Gastrocnemius medialis (tissue), 4 donors: ENCODE measurements at regions of chr11 and their contacts with region 1.

Region 1: GRCh38 chr11:17683378-17684161 is 35.8 kb upstream of the MYOD1 start:
- DNase-seq: peak; percentile 58 to 87
- ATAC-seq: peak; percentile 69 to 71
- H3K4me3 ChIP-seq: no peak overlapping the region
- H3K27ac ChIP-seq: peak overlapping the region; percentile 80 to 87 (median 82)
- H3K4me1 ChIP-seq: peaks cover 56 to 61% of the 10 kb centered on the region in 2 donors
- H3K27me3 ChIP-seq: no peaks in the 10 kb centered on the region
- CTCF ChIP-seq: no peak
- POLR2A ChIP-seq: peak in 1 of 2 donors; percentile 26

Region 2: GRCh38 chr11:17703951-17704350 is 20.4 kb after region 1 on chr11:
- in situ Hi-C with region 1: no loop called
- intact Hi-C with region 1: loop called (anchors 1 kb)
- DNase-seq: no peak
- ATAC-seq: peak in 1 of 2 donors; percentile 9
- H3K4me3 ChIP-seq: no peak overlapping the region
- H3K27ac ChIP-seq: no peak overlapping the region
- H3K4me1 ChIP-seq: peaks cover 23 to 31% of the 10 kb centered on the region in 2 donors
- H3K27me3 ChIP-seq: no peaks in the 10 kb centered on the region
- CTCF ChIP-seq: no peak
- POLR2A ChIP-seq: no peak

Region 3: GRCh38 chr11:17714356-17714854 is 30.8 kb after region 1 on chr11:
- in situ Hi-C with region 1: no loop called
- intact Hi-C with region 1: loop called (anchors 1 kb)
- DNase-seq: peak; percentile 88 to 97
- ATAC-seq: peak; percentile 61 to 74
- H3K4me3 ChIP-seq: peak overlapping the region in 3 of 4 donors; percentile 0 to 43 (median 28)
- H3K27ac ChIP-seq: peak overlapping the region; percentile 91 to 99 (median 95)
- H3K4me1 ChIP-seq: peaks cover 40 to 43% of the 10 kb centered on the region in 2 donors
- H3K27me3 ChIP-seq: no peaks in the 10 kb centered on the region
- CTCF ChIP-seq: peak in 4 of 5 experiments; percentile 29 to 59 (median 36)
- POLR2A ChIP-seq: peak; percentile 54 to 86

Region 4: DNA sequence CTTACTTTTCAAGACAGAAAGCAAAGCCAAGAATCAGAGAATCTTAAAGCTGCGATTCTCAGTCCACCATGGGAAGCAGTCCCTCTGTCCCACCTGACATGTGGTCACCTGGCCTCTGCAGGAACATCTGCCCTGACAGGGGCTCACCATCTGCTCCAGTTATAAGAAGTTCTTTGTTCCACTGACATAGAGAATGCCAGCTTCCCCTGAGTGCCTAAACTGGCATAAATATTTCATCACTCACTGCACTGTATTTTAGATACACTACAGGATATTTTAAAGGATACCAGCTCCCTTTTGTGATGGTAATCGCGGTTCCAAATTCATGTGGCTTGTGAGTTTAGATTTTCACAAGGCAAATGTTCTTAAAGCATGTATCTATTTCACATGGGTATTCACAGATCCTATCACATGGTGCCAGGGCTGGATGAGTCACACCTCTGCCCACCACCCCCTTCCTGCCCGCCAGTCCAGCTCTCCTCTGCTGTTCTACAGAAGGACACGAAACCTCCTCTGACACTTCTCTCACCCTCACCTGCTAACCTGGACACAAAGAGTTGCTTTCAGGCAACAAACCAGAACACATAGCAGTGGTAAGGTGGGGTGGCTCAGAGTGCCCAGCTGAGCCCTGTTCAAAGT is 156.5 kb after region 1 on chr11:
- in situ Hi-C with region 1: no loop called
- intact Hi-C with region 1: loop called (anchors 5 kb)
- DNase-seq: peak; percentile 70 to 84
- ATAC-seq: peak; percentile 52 to 55
- H3K4me3 ChIP-seq: no peak overlapping the region
- H3K27ac ChIP-seq: peak overlapping the region; percentile 91 to 97 (median 92)
- H3K4me1 ChIP-seq: peaks cover 36 to 46% of the 10 kb centered on the region in 2 donors
- H3K27me3 ChIP-seq: no peaks in the 10 kb centered on the region
- CTCF ChIP-seq: no peak
- POLR2A ChIP-seq: peak; percentile 19 to 52